ENCODE measurements at regions of chr3 and their contacts with region 1.

Region 1: GRCh38 chr3:48439820-48440589 is at the starts of genes CCDC51 and TMA7:
- DNase-seq: peak; percentile 99
- ATAC-seq: peak; percentile 96
- H3K4me3 Mint-ChIP-seq: peak within 1 kb of the TSS; percentile 97
- H3K27ac Mint-ChIP-seq: peak within 1 kb of the TSS; percentile 97
- H3K4me1 Mint-ChIP-seq: peaks cover 45% of the 10 kb centered on the region
- H3K27me3 Mint-ChIP-seq: no peaks in the 10 kb centered on the region
- total RNA-seq, gene CCDC51: 18.4 to 21.9 TPM
- total RNA-seq, gene TMA7: 219 to 298 TPM

Region 2: DNA sequence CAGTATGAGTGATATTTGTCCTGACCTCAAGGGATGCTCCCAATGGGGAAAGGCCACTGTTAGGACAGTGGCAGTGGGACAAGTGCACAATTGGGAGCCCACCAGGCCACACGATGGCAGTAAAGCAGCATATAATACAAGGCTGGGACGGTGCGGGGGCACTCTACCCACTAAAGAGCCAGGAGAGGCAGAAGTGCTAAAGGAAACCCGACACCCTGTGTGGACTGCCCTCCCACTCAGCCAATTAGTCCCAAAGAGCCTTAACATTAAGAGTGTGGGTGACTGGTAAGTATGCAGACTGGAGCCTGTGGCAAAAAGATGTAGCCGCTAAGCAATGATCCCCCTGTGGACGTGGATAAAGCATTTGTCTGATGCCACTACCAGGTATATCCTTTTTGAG is 207.3 kb before region 1 on chr3:
- CTCF ChIA-PET with region 1: interaction called, 46 read pairs
- DNase-seq: peak; percentile 81
- ATAC-seq: peak; percentile 98
- H3K4me3 Mint-ChIP-seq: no peak overlapping the region
- H3K27ac Mint-ChIP-seq: no peak overlapping the region
- H3K4me1 Mint-ChIP-seq: peaks cover 7% of the 10 kb centered on the region
- H3K27me3 Mint-ChIP-seq: peaks cover 3% of the 10 kb centered on the region

Region 3: GRCh38 chr3:48301020-48301796 is 138.8 kb before region 1 on chr3:
- CTCF ChIA-PET with region 1: interaction called, 28 read pairs
- DNase-seq: peak; percentile 95
- ATAC-seq: peak; percentile 90
- H3K4me3 Mint-ChIP-seq: peak within 1 kb of the TSS; percentile 81
- H3K27ac Mint-ChIP-seq: peak within 1 kb of the TSS; percentile 94
- H3K4me1 Mint-ChIP-seq: peaks cover 39% of the 10 kb centered on the region
- H3K27me3 Mint-ChIP-seq: peaks cover 9% of the 10 kb centered on the region

Region 4: DNA sequence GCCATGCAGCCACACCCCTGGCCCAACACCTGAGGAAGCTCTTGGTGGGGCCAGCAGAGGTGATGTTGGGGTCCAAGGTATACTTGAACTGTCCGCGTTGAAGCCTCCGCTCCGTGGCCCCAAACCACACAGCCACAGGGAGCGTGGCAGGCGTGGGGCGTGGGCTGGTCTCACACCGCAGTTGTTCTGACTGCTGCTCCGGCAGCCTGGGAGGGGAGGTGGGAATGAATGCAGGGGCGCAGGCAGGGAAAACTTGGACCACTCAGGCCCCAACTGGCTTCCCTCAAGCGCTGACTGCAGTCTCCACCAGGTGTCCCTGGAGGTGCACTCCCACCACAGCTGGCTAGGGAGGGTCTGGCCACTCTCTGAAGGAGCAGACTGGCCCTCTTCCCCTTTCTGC is 24.5 kb before region 1 on chr3:
- CTCF ChIA-PET with region 1: interaction called, 25 read pairs
- DNase-seq: no peak
- ATAC-seq: no peak
- H3K4me3 Mint-ChIP-seq: no peak overlapping the region
- H3K27ac Mint-ChIP-seq: no peak overlapping the region
- H3K4me1 Mint-ChIP-seq: no peaks in the 10 kb centered on the region
- H3K27me3 Mint-ChIP-seq: no peaks in the 10 kb centered on the region

Region 5: GRCh38 chr3:48472915-48473616 is 33.1 kb after region 1 on chr3:
- CTCF ChIA-PET with region 1: interaction called, 46 read pairs
- DNase-seq: peak; percentile 99
- ATAC-seq: peak; percentile 88
- H3K4me3 Mint-ChIP-seq: peak overlapping the region; percentile 85
- H3K27ac Mint-ChIP-seq: peak overlapping the region; percentile 95
- H3K4me1 Mint-ChIP-seq: peaks cover 73% of the 10 kb centered on the region
- H3K27me3 Mint-ChIP-seq: no peaks in the 10 kb centered on the region

Region 6: DNA sequence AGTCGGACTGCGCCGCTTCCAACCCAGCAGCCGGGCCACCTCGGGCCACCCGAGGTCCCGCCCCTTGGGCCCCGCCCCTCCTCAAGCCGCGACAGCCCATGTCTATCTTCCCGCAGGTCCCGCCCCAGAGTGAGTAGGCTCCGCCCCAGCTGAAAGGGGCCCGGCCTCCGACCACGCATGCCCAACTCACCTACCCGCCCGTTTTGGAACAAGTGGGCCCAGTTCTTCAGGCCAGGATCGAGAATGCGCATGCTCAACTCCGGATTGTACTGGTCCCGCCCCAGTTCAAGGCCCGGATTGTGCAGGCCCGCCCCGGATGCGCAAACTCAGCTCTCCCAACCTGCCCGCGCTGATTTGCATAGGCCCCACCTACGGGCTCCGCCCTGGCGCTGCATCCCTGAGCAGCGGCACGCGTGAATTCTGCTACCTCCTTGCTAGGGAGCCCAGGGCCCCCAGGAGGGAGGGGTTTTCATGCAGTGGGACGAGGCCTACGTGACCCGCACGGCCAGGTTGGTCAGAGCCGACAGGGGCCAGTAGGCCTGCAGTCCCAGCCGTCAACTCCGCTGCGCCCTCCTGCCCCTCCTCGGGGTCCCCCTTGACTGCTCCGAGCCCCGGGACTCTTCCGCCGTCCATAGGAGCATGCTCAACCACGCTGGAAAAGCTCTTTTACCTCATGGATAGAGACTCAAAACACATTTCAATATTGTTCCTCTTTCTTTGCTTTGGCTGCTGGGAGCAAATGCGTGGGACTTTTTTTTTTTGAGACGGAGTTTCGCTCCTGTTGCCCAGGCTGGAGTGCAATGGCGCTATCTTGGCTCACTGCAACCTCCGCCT is 117.0 kb after region 1 on chr3 and contains the start of gene PFKFB4:
- CTCF ChIA-PET with region 1: interaction called, 64 read pairs
- DNase-seq: peak; percentile 100
- ATAC-seq: peak; percentile 89
- H3K4me3 Mint-ChIP-seq: peak within 1 kb of the TSS; percentile 84
- H3K27ac Mint-ChIP-seq: peak within 1 kb of the TSS; percentile 86
- H3K4me1 Mint-ChIP-seq: peaks cover 47% of the 10 kb centered on the region
- H3K27me3 Mint-ChIP-seq: no peaks in the 10 kb centered on the region
- total RNA-seq, gene PFKFB4: 12.2 to 26.9 TPM

Region 7: DNA sequence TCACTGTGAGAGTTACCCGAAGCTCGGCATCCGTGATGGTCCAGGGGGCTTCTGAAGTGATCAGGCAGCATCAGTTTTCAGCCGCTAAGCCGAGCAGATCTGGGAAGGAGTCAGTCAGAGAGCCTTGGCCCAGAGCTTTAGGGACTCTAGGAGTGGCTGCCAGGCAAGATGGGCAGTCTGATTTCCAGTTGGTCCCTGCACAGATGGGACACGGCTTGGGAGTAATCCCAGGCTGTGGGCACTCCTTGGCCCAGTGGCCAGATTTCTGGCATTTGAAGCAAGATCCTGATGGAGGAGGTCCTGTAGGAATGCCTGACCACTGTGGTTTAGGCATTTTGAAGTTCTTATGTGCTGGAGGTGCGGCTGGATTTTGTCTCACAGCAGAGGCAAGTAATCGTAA is 287.5 kb after region 1 on chr3:
- CTCF ChIA-PET with region 1: no interaction called
- DNase-seq: no peak
- ATAC-seq: no peak
- H3K4me3 Mint-ChIP-seq: no peak overlapping the region
- H3K27ac Mint-ChIP-seq: no peak overlapping the region
- H3K4me1 Mint-ChIP-seq: no peaks in the 10 kb centered on the region
- H3K27me3 Mint-ChIP-seq: no peaks in the 10 kb centered on the region

Region 8: GRCh38 chr3:48739955-48740823 is 300.2 kb after region 1 on chr3:
- CTCF ChIA-PET with region 1: no interaction called
- DNase-seq: peak; percentile 70
- ATAC-seq: peak; percentile 97
- H3K4me3 Mint-ChIP-seq: no peak overlapping the region
- H3K27ac Mint-ChIP-seq: no peak overlapping the region
- H3K4me1 Mint-ChIP-seq: peaks cover 2% of the 10 kb centered on the region
- H3K27me3 Mint-ChIP-seq: no peaks in the 10 kb centered on the region